ENCODE measurements at regions of chr5 and their contacts with region 1.

Region 1: DNA sequence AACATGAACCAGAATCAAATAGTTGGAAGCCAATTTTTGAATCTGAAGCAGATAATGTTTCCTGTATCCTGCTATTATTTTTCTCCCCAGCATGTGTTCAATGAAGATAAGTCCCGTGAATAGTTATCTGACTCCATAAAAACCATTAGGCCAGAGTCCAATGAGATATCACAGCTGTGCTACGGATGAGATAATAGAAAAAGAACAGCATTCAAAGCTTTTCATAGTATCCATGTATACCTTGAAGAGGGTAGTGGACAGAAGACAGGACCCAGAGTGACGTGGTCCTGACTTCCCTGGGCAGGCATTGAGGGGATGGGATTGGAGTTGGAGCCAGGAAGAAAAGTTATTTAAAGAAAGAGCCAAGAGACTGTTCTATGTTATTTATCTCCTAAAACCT is 50.7 kb upstream of the C6 start:
- DNase-seq: no peak

Region 2: GRCh38 chr5:41835645-41836044 is 571.6 kb after region 1 on chr5:
- intact Hi-C with region 1: loop called (anchors 5 kb)
- DNase-seq: peak; percentile 86